Ovary (tissue), 10 donors: ENCODE measurements at regions of chr16 and their contacts with region 1.

Region 1: GRCh38 chr16:17483351-17483750 is 12.6 kb upstream of the XYLT1 start:
- DNase-seq: no peak
- H3K4me3 ChIP-seq: no peak overlapping the region
- H3K27ac ChIP-seq: no peak overlapping the region
- H3K4me1 ChIP-seq: no peaks in the 10 kb centered on the region
- H3K27me3 ChIP-seq: no peaks in the 10 kb centered on the region
- CTCF ChIP-seq: no peak
- EP300 ChIP-seq: no peak
- POLR2A ChIP-seq: no peak

Region 2: DNA sequence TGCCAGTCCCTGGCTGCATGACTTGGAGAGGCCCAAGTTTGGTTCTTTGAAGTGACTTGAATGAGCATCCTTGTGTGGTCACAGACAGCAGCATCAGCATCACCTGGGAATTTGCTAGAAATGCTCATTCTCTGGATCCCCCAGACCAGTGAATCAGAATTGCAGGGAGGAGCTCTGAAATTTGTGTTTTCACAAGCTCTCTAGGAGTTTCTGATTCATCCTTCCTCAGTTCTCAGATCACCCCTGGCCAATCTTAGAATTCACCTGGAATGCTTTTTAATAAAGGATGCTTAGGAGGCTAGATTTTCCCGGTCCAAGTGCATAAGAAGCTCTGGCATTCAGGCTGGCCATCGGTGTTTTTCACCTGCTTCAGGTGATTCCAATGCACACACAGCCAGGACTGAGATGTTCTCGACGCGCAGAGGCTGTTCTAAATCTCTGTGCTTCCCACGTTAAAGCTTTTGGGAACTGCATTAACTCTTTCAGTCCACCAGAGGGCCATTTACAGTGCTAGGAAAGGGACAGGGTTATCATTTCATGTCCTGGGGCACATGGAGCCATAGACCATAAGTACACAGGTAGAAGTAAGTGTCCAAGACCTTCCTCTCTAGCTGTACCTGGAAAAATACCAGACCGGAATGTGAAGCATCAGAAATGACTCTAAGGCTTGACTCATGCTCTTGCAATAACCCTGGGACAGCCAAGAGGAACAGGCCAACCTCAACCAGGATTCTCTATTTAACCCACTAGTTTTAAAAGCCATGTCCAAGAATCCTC is 73.1 kb after region 1 on chr16:
- intact Hi-C with region 1: loop called in 1 of 4 experiments (anchors 10 kb)
- DNase-seq: no peak
- H3K4me3 ChIP-seq: no peak overlapping the region
- H3K27ac ChIP-seq: no peak overlapping the region
- H3K4me1 ChIP-seq: no peaks in the 10 kb centered on the region
- H3K27me3 ChIP-seq: no peaks in the 10 kb centered on the region
- CTCF ChIP-seq: no peak
- EP300 ChIP-seq: no peak
- POLR2A ChIP-seq: no peak